Activated CD4-positive, alpha-beta T cell treated with anti-CD3 and anti-CD28 coated beads, Interleukin-2, amount 10 ng/mL, durations not matched to agents 24 days and 14 days (primary cell): ENCODE measurements at regions of chr2 and their contacts with region 1.

Region 1: DNA sequence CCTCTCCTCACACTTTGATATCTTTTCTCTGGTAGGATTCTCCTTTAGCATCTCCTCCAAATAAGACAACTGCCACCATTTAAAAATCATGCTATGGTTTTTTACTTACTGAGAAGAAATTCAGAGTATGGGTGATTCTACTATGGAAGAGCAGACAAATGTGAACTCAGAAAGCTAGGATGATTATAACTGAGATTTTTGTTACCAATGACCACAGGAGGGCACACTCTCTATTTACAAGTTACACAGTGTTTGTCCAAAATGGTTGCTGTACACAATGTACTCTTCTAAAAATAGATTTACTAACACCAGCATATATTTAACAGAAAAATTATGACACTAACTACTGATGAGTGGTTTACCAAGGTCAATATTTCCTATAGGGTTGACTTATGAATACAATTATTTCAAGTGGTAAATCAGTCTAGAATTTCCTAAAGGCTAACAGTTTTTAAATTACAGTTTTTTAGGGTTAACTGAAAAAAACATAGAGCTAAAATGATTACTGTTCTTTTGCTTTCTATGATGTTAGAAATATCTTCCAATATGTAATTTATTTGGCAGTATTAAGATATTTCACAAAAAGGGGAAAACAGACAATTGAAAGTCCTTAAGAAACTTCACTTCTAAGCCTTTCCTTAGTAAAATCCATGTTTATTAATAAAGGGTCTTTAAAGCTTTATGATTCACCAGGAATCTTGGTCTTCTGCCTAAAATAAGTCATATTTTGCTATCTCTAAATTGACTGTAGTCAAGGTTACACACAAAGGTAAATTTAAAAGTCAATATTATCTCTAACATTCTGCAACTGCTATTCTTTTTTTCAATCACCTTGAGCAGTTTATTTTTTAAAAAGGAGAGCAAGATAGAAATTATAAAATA is 57.2 kb downstream of the MAP4K3 start:
- DNase-seq: peak; percentile 65
- H3K4me3 Mint-ChIP-seq: no peak overlapping the region
- H3K27ac Mint-ChIP-seq: peak overlapping the region; percentile 27
- H3K4me1 Mint-ChIP-seq: peaks cover 29% of the 10 kb centered on the region
- H3K27me3 Mint-ChIP-seq: no peaks in the 10 kb centered on the region

Region 2: DNA sequence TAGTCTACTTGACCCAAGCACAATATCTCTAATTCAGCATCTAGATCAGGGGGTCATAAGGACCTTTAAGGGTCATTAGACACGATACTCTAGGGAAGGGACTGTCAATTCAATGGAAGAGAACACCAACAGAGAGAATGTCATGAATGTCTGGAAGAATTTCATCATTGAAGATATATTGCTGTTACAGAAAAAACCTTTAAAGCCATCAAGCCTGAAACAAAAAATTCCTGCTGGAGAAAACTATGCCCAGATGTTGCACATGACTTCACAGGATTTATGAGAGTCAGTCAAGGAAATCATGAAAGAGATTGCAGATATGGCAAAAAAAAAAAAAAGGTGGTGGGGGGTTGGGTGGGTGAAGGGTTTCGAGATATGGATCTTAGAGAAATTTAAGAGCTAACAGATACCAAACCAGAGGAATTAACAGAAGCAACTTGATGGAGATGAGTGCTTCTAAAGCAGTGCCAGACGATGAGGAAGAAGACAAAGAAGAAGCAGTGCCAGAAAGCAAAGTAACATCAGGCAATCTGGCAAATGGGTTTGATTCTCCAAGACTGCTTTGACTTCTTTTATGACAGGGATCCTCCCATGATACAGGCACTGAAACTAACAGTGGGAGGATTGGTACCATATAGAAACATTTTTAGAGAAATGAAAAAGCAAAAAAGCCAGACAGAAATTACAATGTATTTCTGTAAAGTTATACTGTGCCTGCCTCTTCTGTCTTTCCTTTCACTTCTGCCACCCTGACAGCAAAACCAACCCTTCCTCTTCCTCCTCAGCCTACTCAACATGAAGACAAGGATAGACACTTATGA is 28.6 kb after region 1 on chr2:
- intact Hi-C with region 1: loop called (anchors 2 kb)
- DNase-seq: no peak
- H3K4me3 Mint-ChIP-seq: peak overlapping the region; percentile 1
- H3K27ac Mint-ChIP-seq: peak overlapping the region; percentile 20
- H3K4me1 Mint-ChIP-seq: peaks cover 37% of the 10 kb centered on the region
- H3K27me3 Mint-ChIP-seq: peaks cover 1% of the 10 kb centered on the region

Region 3: GRCh38 chr2:39436592-39437510 is 57.0 kb after region 1 on chr2 and contains the start of gene MAP4K3:
- intact Hi-C with region 1: loop called (anchors 2 kb)
- DNase-seq: peak; percentile 93
- H3K4me3 Mint-ChIP-seq: peak within 1 kb of the TSS; percentile 91
- H3K27ac Mint-ChIP-seq: peak within 1 kb of the TSS; percentile 90
- H3K4me1 Mint-ChIP-seq: peaks cover 44% of the 10 kb centered on the region
- H3K27me3 Mint-ChIP-seq: no peaks in the 10 kb centered on the region
- total RNA-seq, gene MAP4K3: 12.9 and 16.6 TPM in 2 replicates

Region 4: GRCh38 chr2:39492095-39492590 is 112.3 kb after region 1 on chr2:
- intact Hi-C with region 1: loop called (anchors 1 kb)
- DNase-seq: peak; percentile 80
- H3K4me3 Mint-ChIP-seq: peak overlapping the region; percentile 51
- H3K27ac Mint-ChIP-seq: peak overlapping the region; percentile 73
- H3K4me1 Mint-ChIP-seq: peaks cover 43% of the 10 kb centered on the region
- H3K27me3 Mint-ChIP-seq: peaks cover 13% of the 10 kb centered on the region

Region 5: DNA sequence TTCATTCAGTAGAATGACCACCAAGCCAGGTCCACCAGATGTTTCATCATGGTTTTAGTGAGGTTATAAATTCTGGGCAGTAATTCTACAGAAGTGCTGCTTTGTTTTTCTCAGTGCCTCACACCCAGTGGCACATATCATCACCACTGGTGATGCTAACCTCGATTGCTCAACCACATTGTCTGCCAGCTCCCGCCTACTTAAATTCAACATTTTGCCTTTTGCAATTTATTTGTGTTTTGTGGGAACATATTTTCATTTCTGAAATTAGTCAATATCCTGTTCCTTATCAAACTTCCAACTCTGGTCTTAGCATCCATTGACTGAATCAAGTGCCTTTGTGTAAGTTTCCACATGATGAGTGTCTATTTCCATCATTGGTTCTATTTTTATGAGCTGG is 223.6 kb after region 1 on chr2:
- intact Hi-C with region 1: loop called (anchors 1 kb)
- DNase-seq: no peak
- H3K4me3 Mint-ChIP-seq: no peak overlapping the region
- H3K27ac Mint-ChIP-seq: no peak overlapping the region
- H3K4me1 Mint-ChIP-seq: peaks cover 2% of the 10 kb centered on the region
- H3K27me3 Mint-ChIP-seq: peaks cover 7% of the 10 kb centered on the region

Region 6: DNA sequence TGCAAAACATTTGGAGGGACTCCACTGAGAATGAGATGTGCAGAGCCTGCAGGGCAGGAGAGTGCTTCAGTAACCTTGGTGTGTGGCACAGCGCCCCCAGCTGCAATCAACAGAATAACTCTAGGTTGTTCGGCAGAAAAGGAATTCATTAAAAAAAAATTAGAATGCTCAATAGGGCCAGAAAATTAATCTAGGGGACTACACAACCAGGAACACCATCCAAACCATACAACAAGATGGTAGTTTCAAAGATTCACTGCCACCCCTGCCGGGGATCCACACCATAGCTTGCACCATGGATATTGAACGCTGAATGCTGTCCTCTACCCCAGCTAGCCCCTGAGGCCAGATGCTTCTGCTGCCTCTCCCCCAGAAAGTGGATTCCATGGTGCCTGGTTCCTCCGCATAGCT is 349.1 kb after region 1 on chr2:
- intact Hi-C with region 1: loop called (anchors 2 kb)
- DNase-seq: peak; percentile 70
- H3K4me3 Mint-ChIP-seq: no peak overlapping the region
- H3K27ac Mint-ChIP-seq: no peak overlapping the region
- H3K4me1 Mint-ChIP-seq: peaks cover 10% of the 10 kb centered on the region
- H3K27me3 Mint-ChIP-seq: peaks cover 2% of the 10 kb centered on the region

Region 7: GRCh38 chr2:39778962-39779851 is 399.3 kb after region 1 on chr2 and contains the start of gene THUMPD2:
- intact Hi-C with region 1: loop called (anchors 5 kb)
- DNase-seq: peak; percentile 91
- H3K4me3 Mint-ChIP-seq: peak within 1 kb of the TSS; percentile 93
- H3K27ac Mint-ChIP-seq: peak within 1 kb of the TSS; percentile 92
- H3K4me1 Mint-ChIP-seq: peaks cover 39% of the 10 kb centered on the region
- H3K27me3 Mint-ChIP-seq: peaks cover 1% of the 10 kb centered on the region
- total RNA-seq, gene THUMPD2: 19.2 and 20.5 TPM in 2 replicates